Dorsolateral prefrontal cortex (tissue), 120 donors: ENCODE measurements at regions of chr1 and their contacts with region 1.

Region 1: GRCh38 chr1:94463765-94464330 is 45.7 kb downstream of the ABCD3 start:
- DNase-seq: no peak
- H3K4me3 ChIP-seq: no peak overlapping the region
- H3K27ac ChIP-seq: peak overlapping the region in 1 of 59 donors; percentile 6
- H3K27me3 ChIP-seq: no peaks in the 10 kb centered on the region
- CTCF ChIP-seq: peak; percentile 41 to 88 (median 65)

Region 2: DNA sequence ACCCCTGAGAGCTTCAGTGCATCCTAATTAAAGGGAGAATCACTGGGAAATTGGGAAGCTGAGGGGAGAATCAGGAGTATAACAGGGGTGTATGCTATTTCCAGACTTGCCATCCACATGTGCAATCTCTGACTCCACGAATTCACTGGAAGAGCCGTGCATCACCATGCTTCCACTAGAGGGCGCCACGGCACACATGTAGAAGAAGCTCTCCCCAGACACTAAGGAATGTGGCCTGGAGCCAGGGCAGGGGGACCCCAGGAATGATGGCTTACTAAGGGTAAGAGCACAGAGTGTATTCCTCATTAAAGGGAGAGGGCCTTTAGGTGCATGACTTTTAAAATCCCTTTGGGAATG is 424.4 kb before region 1 on chr1:
- intact Hi-C with region 1: loop called in 1 of 2 experiments (anchors 10 kb)
- DNase-seq: peak in 8 of 10 donors; percentile 49 to 74 (median 62)
- H3K4me3 ChIP-seq: no peak overlapping the region
- H3K27ac ChIP-seq: peak overlapping the region in 3 of 59 donors; percentile 2 to 46 (median 14)
- H3K27me3 ChIP-seq: peaks cover 0 to 16% (median 0%) of the 10 kb centered on the region in 45 donors
- CTCF ChIP-seq: peak; percentile 56 to 87 (median 79)

Region 3: GRCh38 chr1:94055459-94056122 is 408.3 kb before region 1 on chr1:
- intact Hi-C with region 1: loop called (anchors 10 kb)
- DNase-seq: no peak
- H3K4me3 ChIP-seq: no peak overlapping the region
- H3K27ac ChIP-seq: no peak overlapping the region
- H3K27me3 ChIP-seq: no peaks in the 10 kb centered on the region
- CTCF ChIP-seq: no peak

Region 4: DNA sequence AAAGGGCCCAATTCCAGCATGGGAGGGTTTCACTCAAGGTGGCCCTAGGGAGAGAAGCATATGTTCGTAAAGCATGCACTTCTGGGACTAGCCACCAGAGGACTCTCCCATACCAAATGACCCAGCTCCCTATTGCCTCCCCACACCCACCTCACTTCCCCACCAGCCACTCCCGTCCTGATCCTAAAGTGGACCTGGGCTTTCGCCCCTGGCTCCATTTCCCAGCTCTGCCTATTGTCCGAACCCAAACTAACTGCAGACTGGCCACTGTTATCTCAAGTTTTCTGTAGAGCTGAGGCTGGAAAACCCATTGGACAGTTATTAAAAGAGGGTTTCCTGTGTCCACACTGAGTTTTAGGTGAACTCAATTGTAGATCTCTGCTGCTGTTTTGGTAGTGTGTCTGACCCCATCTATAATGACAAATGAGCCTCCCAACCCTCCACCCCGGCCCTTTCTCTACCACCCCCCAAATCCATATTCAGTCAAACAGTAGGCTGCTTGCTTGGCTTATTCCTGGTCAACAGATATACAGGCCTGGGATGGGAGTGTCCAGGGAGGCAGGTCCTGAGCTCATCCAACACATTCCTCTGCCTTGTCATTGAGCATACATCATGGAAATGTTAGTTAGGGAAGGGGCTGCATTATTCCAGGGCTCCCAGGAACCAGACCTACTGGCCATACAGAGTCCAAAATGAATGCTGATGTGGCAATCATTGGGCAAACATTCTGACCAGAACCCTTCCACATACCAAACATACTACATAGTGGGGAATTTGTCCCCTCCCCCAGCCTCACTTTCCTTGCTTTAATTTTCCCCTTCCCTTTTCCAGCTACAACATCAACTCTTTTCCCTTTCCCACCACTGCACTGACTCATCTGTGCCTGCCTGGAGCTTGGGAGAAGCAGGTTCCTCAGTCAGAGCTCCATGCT is 402.1 kb before region 1 on chr1:
- intact Hi-C with region 1: loop called (anchors 10 kb)
- DNase-seq: peak in 7 of 10 donors; percentile 52 to 75 (median 59)
- H3K4me3 ChIP-seq: no peak overlapping the region
- H3K27ac ChIP-seq: peak overlapping the region in 9 of 59 donors; percentile 5 to 61 (median 23)
- H3K27me3 ChIP-seq: no peaks in the 10 kb centered on the region
- CTCF ChIP-seq: peak; percentile 77 to 95 (median 88)

Region 5: DNA sequence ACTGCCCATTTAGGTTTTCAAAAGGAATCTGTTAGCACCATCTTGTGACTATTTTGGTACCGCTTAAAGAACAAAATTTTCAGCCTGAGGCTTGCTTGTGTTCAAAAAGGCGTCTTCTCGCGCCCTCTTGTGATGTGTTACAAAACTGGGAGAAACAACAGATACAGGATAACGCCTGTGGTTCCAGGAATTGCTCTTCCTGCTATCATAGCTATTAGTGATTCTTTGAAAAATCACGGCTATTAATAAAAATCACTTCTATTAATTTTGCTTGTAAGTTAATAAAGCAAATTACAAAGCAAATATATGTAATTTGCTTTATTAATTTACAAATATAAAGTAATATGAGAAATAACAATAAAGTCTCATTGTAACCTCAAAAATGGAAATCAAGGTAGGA is 127.9 kb before region 1 on chr1:
- intact Hi-C with region 1: loop called in 1 of 2 experiments (anchors 5 kb)
- DNase-seq: peak in 9 of 10 donors; percentile 51 to 86 (median 60)
- H3K4me3 ChIP-seq: peak overlapping the region in 1 of 59 donors; percentile 11
- H3K27ac ChIP-seq: peak overlapping the region in 3 of 59 donors; percentile 17 to 44 (median 24)
- H3K27me3 ChIP-seq: peaks cover 0 to 8% (median 0%) of the 10 kb centered on the region in 45 donors
- CTCF ChIP-seq: peak in 55 of 56 donors; percentile 69 to 100 (median 98)

Region 6: DNA sequence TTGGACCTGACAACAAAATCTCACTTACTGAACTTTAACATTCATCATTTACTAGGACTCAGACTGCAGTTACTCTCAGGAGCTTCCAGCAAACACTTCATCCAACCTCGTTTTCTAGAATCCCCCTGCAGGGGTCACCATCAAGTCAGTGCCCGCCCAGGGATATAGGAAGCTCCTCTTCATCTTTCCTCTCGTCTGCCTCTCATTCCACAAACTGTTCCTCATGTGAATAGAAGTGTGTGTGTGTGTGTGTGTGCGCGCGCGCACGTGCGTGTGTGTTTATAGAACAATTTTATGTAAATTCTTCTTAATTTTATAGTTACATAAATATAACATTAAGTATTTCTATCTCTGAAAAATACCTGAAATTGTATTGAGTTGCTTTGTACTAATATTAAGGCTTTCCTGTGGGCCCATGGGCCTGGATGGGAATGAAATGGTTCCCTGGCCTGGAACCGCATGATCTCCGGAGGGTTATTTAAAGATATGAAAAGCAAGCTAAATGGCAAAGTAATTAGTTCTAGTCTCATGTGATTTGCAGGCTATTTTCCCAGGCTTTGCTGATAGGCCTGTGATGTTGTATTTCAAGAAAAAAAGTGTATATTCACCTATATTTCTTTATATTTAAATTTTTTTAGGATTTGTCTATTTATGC is 67.4 kb before region 1 on chr1:
- intact Hi-C with region 1: loop called in 1 of 2 experiments (anchors 1 kb)
- DNase-seq: peak in 4 of 10 donors; percentile 3 to 57 (median 32)
- H3K4me3 ChIP-seq: no peak overlapping the region
- H3K27ac ChIP-seq: no peak overlapping the region
- H3K27me3 ChIP-seq: peaks cover 0 to 4% (median 0%) of the 10 kb centered on the region in 45 donors
- CTCF ChIP-seq: peak in 47 of 56 donors; percentile 9 to 70 (median 40)

Region 7: GRCh38 chr1:94417978-94418663 is 45.7 kb before region 1 on chr1 and contains the start of gene ABCD3:
- intact Hi-C with region 1: loop called in 1 of 2 experiments (anchors 2 kb)
- DNase-seq: peak; percentile 90 to 95 (median 94)
- H3K4me3 ChIP-seq: peak within 1 kb of the TSS; percentile 76 to 99 (median 96)
- H3K27ac ChIP-seq: peak within 1 kb of the TSS; percentile 80 to 99 (median 97)
- H3K27me3 ChIP-seq: no peaks in the 10 kb centered on the region
- CTCF ChIP-seq: peak in 29 of 56 donors; percentile 5 to 62 (median 25)
- total RNA-seq, gene ABCD3: 29.3 to 56.2 (median 39.9) TPM

Region 8: DNA sequence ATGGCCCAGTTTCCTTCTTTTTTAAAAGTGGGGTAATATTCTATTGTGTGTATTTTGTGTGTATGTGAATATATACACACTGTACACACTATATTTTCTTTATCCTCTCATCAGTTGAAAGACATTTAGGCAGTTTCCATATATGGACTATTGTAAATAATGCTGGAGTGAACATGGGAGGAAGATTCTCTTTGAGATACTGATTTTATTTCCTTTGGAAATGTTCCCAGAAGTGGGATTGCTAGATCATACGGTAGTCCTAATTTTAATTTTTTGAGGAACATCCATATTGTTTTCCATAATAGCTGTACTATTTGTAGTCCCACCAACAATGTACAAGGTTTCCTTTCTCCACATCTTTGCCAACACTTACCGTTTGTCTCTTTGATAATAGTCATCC is 26.7 kb after region 1 on chr1:
- intact Hi-C with region 1: no loop called
- DNase-seq: no peak
- H3K4me3 ChIP-seq: no peak overlapping the region
- H3K27ac ChIP-seq: no peak overlapping the region
- H3K27me3 ChIP-seq: no peaks in the 10 kb centered on the region
- CTCF ChIP-seq: no peak